PC-9 (cell line): ENCODE measurements at regions of chr3 and their contacts with region 1.

Region 1: DNA sequence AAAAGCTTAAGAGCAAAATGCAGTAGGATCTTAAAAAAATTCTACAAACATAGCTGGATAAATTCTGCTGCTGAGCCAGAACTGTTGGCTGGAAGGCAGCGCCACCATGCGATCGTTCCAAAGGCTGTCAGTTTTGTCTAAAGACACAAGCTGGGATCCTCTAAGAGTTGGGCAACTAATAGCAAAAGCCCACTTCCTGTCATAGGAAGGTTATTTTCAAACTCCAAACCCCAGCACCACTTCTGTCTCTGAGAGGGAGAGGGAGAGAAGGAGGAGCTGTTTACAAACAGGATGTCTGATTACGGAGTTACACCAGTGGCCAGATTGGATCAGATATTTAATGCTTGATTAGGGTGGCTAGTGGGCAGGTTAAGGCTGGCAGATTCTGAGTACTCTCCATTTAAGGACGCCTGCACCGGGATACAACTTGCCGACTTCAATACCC is 44.0 kb downstream of the EIF4E3 start:
- DNase-seq: peak in 1 of 2 experiments; percentile 20
- H3K4me3 ChIP-seq: no peak overlapping the region
- H3K27ac ChIP-seq: no peak overlapping the region
- H3K4me1 ChIP-seq: no peaks in the 10 kb centered on the region
- H3K27me3 ChIP-seq: peaks cover 20% of the 10 kb centered on the region
- CTCF ChIP-seq: peak; percentile 63

Region 2: GRCh38 chr3:70531063-70531657 is 1150.1 kb before region 1 on chr3:
- CTCF ChIA-PET with region 1: no interaction called
- POLR2A ChIA-PET with region 1: no interaction called
- intact Hi-C with region 1: loop called (anchors 10 kb)
- DNase-seq: no peak
- H3K4me3 ChIP-seq: no peak overlapping the region
- H3K27ac ChIP-seq: no peak overlapping the region
- H3K4me1 ChIP-seq: no peaks in the 10 kb centered on the region
- H3K27me3 ChIP-seq: no peaks in the 10 kb centered on the region
- CTCF ChIP-seq: peak; percentile 60; the same call in 1 of the 2 replicates

Region 3: DNA sequence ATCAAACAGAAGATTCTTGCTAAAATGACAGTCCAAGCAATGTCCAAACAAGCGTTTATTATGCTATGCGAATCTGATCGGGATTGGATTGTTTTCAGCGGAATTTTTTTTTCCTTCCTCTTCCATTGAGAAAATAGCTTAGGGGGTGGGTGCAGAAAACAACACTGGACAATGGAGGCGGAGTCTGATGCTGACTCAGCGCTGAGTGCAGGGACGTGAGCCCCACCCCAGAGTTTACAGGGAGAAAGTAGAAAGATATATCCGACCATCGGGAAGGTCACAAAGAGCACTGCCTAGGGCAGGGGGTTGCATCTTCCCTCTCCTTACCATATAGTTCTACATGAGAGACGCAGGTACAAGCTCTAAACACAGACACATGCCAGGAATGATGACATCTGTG is 214.8 kb before region 1 on chr3:
- CTCF ChIA-PET with region 1: no interaction called
- POLR2A ChIA-PET with region 1: no interaction called
- intact Hi-C with region 1: no loop called
- DNase-seq: peak; percentile 59 to 67
- H3K4me3 ChIP-seq: peak overlapping the region; percentile 15; the same call in 1 of the 2 replicates
- H3K27ac ChIP-seq: peak overlapping the region; percentile 41
- H3K4me1 ChIP-seq: peaks cover 28% of the 10 kb centered on the region
- H3K27me3 ChIP-seq: no peaks in the 10 kb centered on the region
- CTCF ChIP-seq: no peak